WTC11 (cell line): ENCODE measurements at regions of chr19 and their contacts with region 1.

Region 1: DNA sequence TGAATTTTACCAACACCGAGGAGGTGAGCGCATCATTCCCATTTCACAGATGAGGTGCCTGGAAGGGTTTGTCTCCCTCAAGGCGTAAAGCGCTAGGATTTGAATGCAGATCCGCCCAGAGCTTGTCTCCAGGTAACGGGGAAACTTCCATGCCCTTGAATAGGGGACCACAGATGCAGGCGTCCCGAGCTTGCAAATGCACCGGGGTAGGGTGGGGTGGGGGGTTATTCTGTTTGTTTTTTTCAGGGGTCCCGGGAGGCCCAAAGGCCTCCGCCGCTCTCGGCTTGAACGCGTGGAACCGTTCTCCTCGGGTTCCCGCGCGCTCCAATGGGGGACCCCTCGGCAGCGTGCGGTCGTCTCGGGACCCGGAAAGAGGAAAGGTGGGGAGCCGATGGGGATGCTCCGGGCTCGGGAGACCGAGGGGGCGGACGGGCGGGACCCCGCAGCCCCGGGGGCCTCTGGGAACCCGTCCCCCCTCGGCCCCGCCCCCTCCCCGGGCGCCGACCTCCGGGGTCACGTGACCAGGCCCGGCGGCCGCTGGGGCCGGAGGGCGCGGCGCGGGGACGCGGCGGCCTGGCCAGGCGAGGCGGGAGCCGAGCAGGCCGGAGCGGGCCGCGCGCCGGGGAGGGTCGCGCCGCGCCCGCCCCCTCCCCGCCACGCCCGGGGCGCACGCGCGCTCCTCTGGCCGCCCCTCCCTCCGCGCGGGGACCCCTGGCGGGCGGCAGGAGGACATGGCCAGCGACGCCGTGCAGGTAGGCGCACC is at the start of gene PKN1:
- DNase-seq: peak; percentile 72
- ATAC-seq: peak; percentile 54
- H3K4me3 Mint-ChIP-seq: peak within 1 kb of the TSS; percentile 82
- H3K27ac Mint-ChIP-seq: peak within 1 kb of the TSS; percentile 72
- H3K4me1 Mint-ChIP-seq: peaks cover 7% of the 10 kb centered on the region
- H3K27me3 Mint-ChIP-seq: peaks cover 29% of the 10 kb centered on the region
- CTCF ChIP-seq: no peak
- total RNA-seq, gene PKN1: 170 to 197 TPM (median 187 TPM) in 3 replicates

Region 2: GRCh38 chr19:14366498-14366915 is 66.5 kb before region 1 on chr19:
- CTCF ChIA-PET with region 1: interaction called, 13 read pairs
- POLR2A ChIA-PET with region 1: no interaction called
- DNase-seq: peak; percentile 89
- ATAC-seq: peak; percentile 65
- H3K4me3 Mint-ChIP-seq: no peak overlapping the region
- H3K27ac Mint-ChIP-seq: no peak overlapping the region
- H3K4me1 Mint-ChIP-seq: peaks cover 24% of the 10 kb centered on the region
- H3K27me3 Mint-ChIP-seq: no peaks in the 10 kb centered on the region; the same call in 1 of the 2 replicates
- CTCF ChIP-seq: no peak

Region 3: GRCh38 chr19:14385492-14385891 is 47.5 kb before region 1 on chr19:
- CTCF ChIA-PET with region 1: no interaction called
- POLR2A ChIA-PET with region 1: no interaction called
- DNase-seq: no peak
- ATAC-seq: no peak
- H3K4me3 Mint-ChIP-seq: no peak overlapping the region
- H3K27ac Mint-ChIP-seq: no peak overlapping the region; the same call in 1 of the 2 replicates
- H3K4me1 Mint-ChIP-seq: peaks cover 24% of the 10 kb centered on the region
- H3K27me3 Mint-ChIP-seq: peaks cover 3% of the 10 kb centered on the region
- CTCF ChIP-seq: no peak

Region 4: DNA sequence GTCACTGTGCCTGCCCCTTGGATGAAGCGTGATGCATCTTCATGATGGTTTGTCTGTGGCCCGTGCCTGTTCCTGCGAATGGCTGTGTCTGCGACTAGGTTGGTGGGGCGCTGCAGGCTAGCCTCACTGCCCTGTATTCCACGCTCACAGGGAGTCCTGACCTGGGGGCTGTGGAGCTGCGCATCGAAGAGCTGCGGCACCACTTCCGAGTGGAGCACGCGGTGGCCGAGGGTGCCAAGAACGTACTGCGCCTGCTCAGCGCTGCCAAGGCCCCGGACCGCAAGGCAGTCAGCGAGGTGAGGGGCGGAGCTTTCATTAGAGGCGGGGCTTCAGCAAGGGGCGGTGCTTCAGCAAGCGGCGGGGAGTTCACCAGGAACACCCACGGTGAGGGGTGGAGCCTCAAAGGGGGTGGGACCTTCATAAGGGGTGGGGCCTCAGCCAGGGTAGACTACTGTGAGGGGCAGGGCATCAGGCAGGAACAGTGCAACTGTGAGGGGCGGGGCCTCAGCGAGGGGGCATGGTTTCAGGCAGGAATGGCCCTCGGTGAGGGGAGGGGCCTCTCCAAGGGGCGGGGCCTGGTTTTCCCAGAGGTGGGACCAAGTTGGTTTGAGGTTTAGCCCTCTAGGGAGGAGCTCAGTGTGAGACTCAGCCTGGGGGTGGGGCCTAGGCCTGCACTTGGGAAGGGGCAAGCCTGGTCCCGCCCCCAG is 17.3 kb after region 1 on chr19:
- CTCF ChIA-PET with region 1: interaction called, 26 read pairs
- POLR2A ChIA-PET with region 1: no interaction called
- DNase-seq: peak; percentile 100
- ATAC-seq: peak; percentile 99
- H3K4me3 Mint-ChIP-seq: no peak overlapping the region
- H3K27ac Mint-ChIP-seq: peak overlapping the region; percentile 89
- H3K4me1 Mint-ChIP-seq: no peaks in the 10 kb centered on the region
- H3K27me3 Mint-ChIP-seq: no peaks in the 10 kb centered on the region
- CTCF ChIP-seq: no peak

Region 5: GRCh38 chr19:14472202-14472938 is 39.4 kb after region 1 on chr19:
- CTCF ChIA-PET with region 1: interaction called, 53 read pairs
- POLR2A ChIA-PET with region 1: interaction called, 3 read pairs
- DNase-seq: peak; percentile 91
- ATAC-seq: peak; percentile 56
- H3K4me3 Mint-ChIP-seq: peak overlapping the region; percentile 56
- H3K27ac Mint-ChIP-seq: no peak overlapping the region
- H3K4me1 Mint-ChIP-seq: peaks cover 24% of the 10 kb centered on the region
- H3K27me3 Mint-ChIP-seq: peaks cover 12% of the 10 kb centered on the region
- CTCF ChIP-seq: peak; percentile 100